GM10248 (cell line): ENCODE measurements at regions of chr3 and their contacts with region 1.

Region 1: DNA sequence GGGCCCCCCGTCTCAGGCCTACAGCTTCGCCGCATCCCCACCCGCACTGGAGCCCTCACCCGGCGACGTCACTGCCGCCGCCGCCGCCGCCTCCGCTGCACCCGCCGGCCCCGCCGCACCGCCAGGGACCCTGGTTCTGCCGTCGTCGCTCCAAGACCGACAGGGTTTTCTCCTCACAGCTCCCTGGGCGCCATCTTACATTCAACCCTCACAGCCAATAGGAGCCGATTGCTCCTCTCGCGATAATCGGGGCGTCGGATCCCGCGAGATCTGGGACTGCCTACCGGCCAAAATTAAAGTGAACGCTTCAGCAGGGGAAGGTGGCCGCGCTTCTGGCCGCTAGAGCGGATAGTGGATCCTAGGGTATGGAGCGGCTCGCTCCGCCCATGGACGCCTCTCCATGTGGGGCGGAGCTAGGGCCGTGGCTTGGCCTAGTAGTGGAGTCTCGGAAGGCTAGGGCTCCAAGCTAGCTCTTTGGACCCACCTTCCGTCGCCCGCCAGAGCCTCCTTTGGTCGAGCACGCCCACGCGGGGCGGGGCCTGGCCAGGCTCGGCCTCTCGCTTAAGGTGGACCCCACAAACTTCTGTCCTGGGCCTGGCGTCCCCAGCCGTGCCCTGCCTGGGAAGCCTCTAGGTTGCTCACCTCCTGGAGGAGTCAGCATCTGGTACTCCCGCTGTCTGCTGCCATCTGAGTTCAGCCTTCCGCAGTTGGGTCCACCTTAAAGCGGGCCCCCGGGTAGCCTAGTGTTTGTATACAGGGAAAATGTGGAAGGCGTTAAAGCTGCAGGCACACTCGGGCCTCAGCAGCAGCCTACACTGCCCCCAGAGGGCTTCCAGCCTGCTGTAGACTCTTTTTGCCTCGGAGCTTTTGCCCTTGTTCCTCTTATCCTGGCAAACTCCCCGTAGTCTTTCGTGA is at the start of gene QRICH1:
- DNase-seq: peak; percentile 95
- CTCF ChIP-seq: peak; percentile 58

Region 2: DNA sequence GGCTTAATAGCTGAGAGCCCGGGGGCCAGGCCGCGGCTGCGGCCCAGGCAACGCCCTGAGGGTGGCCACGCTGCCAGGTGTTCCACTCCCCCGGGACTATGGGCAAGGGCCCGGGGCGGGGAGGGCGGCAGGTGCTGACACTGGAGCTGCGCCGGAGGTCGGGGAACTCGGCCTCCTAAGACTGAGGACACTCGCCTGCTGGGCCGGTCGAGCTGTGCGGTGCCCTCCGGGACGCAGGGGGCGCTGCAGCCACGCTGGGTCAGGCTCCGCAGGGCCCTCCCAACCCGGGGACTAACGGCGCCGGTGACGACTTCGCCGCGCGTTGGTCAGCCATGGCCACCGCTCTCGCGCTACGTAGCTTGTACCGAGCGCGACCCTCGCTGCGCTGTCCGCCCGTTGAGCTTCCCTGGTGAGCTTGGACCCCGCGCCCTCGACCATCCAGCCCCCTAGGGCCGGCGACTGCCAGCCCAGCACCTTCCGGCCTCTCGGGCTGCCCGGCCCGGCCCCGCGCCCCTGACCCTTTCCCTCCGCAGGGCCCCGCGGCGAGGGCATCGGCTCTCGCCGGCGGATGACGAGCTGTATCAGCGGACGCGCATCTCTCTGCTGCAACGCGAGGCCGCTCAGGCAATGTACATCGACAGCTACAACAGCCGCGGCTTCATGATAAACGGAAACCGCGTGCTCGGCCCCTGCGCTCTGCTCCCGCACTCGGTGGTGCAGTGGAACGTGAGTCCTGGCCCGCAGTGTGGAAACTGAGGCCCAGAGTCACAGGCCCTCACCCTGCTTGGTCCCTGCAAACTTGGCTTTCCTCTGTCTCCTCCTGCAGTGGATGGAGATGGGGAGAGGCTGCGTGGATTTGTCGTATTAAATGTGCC is 72.1 kb before region 1 on chr3 and contains the start of gene NDUFAF3:
- CTCF ChIA-PET with region 1: interaction called, 10 read pairs
- POLR2A ChIA-PET with region 1: interaction called, 14 read pairs
- DNase-seq: peak; percentile 90
- CTCF ChIP-seq: peak; percentile 99

Region 3: DNA sequence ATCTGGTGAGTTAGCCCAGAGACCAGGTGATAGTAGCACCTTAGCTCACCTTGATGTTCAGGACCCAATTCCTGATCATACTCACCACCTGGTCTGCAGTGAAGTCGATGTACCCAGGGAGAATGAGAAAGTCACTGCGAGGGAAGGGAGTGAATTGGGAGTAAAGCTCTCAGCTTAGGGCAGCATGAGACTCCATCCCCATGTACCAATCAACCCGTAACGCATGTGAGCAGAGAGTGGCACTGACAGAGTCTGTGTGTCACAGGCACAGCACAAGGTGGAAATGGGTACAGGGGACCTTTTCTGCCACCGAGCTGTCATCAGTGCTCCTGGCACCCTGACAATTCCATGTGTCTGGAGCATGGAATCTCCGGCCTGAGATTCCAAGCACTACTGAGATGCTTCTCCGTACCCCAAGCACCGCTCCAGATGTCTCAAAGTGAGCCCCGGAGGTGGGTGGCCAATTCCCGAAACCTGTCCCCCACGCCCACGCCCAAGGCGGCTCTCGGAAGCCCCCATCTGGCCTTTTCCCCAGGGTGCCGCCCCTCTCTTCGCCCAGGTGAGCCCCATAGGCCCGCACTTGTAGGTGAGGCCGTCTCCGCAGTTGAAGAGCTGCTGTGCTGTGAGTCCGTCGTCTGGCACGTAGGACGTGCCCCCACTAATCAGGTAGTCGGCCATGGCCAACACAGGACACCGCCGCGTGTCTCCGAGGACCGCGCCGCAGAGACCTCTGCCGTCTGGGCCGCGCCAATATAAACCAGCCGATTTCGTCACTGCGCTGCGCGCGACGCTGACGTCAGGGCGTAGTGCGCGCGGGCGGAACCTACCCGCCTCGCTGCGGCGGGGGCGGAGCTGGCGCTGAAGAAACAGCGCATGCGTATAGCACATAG is 65.2 kb before region 1 on chr3 and contains the start of gene IMPDH2:
- CTCF ChIA-PET with region 1: interaction called, 3 read pairs
- POLR2A ChIA-PET with region 1: interaction called, 17 read pairs
- DNase-seq: peak; percentile 91
- CTCF ChIP-seq: peak; percentile 16

Region 4: GRCh38 chr3:49081429-49081828 is 12.7 kb before region 1 on chr3:
- CTCF ChIA-PET with region 1: interaction called, 3 read pairs
- POLR2A ChIA-PET with region 1: interaction called, 11 read pairs
- DNase-seq: no peak
- CTCF ChIP-seq: no peak

Region 5: DNA sequence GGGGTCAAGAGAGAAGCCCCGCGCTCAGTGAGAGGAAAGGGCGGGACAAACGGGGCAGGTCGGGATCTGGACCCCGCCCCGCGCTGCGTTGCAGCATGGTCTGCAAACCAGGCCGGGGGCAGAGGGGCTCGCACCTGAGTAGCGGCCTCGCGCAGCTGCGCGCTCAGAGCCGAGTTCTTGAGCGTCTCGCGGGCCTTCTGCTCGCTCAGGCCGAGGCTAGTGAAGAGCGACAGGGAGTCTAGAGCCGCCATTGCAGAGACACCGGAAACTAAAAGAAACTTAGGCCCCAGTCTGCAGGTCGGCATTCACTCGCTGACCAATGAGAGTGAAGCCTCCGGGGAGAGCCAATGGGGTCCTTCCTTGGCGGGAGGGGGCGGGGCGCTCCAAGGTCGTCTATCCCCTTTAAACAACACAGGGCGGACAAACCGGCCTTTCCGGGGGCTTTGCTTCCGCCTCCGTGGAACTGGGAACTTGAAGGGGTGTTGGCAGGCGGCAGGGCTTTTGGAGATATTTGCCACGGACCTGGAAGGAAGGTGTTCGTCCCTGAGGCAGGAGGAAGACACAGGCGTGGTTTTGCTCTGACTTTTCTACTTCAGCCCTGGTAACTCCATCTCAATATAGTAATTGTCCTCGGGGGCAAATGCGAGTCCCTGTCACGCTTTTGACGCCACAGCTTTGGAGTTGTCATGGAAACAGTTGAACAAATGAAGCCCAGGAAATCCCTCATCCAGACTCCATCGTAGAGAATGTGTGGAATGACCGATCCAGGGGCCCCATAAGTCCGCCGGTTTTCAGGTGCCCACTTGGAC is 10.6 kb after region 1 on chr3 and contains the start of gene QARS1:
- CTCF ChIA-PET with region 1: interaction called, 18 read pairs
- POLR2A ChIA-PET with region 1: interaction called, 6 read pairs
- DNase-seq: peak; percentile 97
- CTCF ChIP-seq: no peak